ENCODE measurements at regions of chr17 and their contacts with region 1.

Region 1: GRCh38 chr17:21126645-21127510 is at the start of gene DHRS7B:
- DNase-seq: peak; percentile 92 to 98 (median 96)
- H3K4me3 ChIP-seq: peak within 1 kb of the TSS; percentile 64 to 100 (median 90)
- H3K27ac ChIP-seq: peak within 1 kb of the TSS in 58 of 59 donors; percentile 15 to 94 (median 74)
- H3K27me3 ChIP-seq: no peaks in the 10 kb centered on the region
- CTCF ChIP-seq: peak in 21 of 56 donors; percentile 10 to 48 (median 21)
- total RNA-seq, gene DHRS7B: 13.4 to 31.5 (median 21.3) TPM

Region 2: GRCh38 chr17:20992987-20993862 is 133.7 kb before region 1 on chr17:
- intact Hi-C with region 1: no loop called
- DNase-seq: peak; percentile 49 to 91 (median 78)
- H3K4me3 ChIP-seq: peak overlapping the region in 33 of 59 donors; percentile 8 to 59 (median 30)
- H3K27ac ChIP-seq: peak overlapping the region; percentile 5 to 98 (median 88)
- H3K27me3 ChIP-seq: no peaks in the 10 kb centered on the region
- CTCF ChIP-seq: peak; percentile 70 to 94 (median 90)

Region 3: DNA sequence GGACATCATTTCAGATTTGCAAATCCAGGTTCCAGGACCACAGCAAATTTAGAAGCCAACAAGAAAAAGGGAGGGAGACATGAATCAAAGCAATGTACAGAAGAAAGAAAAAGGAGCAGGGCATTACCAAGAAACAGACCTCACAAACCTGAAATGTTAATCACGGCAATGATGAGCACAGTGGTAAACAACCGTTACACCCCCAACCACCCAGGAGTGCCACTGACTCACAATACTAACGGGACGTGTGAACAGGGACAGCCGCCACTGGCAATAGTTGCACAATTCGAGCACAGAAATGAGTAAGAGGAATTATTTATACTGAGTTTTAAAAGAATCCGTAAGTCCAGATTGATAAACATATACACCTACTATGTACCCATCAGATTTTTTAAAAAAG is 97.8 kb before region 1 on chr17:
- intact Hi-C with region 1: no loop called
- DNase-seq: peak in 2 of 10 donors; percentile 46 to 55
- H3K4me3 ChIP-seq: peak overlapping the region in 14 of 59 donors; percentile 0 to 29 (median 18)
- H3K27ac ChIP-seq: peak overlapping the region in 56 of 59 donors; percentile 1 to 82 (median 67)
- H3K27me3 ChIP-seq: no peaks in the 10 kb centered on the region
- CTCF ChIP-seq: no peak

Region 4: GRCh38 chr17:21228104-21228503 is 101.2 kb after region 1 on chr17:
- intact Hi-C with region 1: no loop called
- DNase-seq: no peak
- H3K4me3 ChIP-seq: no peak overlapping the region
- H3K27ac ChIP-seq: no peak overlapping the region
- H3K27me3 ChIP-seq: no peaks in the 10 kb centered on the region
- CTCF ChIP-seq: no peak

Region 5: GRCh38 chr17:21252796-21253645 is 126.1 kb after region 1 on chr17 and contains the start of gene NATD1:
- intact Hi-C with region 1: loop called in 1 of 2 experiments (anchors 10 kb)
- DNase-seq: peak; percentile 78 to 92 (median 87)
- H3K4me3 ChIP-seq: peak within 1 kb of the TSS; percentile 50 to 85 (median 67)
- H3K27ac ChIP-seq: peak within 1 kb of the TSS in 54 of 59 donors; percentile 9 to 92 (median 76)
- H3K27me3 ChIP-seq: no peaks in the 10 kb centered on the region
- CTCF ChIP-seq: peak in 20 of 56 donors; percentile 7 to 56 (median 27)
- total RNA-seq, gene NATD1: 5.2 to 13.5 (median 7.6) TPM

Region 6: GRCh38 chr17:21457051-21458026 is 330.5 kb after region 1 on chr17:
- intact Hi-C with region 1: loop called in 1 of 2 experiments (anchors 5 kb)
- DNase-seq: peak; percentile 71 to 88 (median 80)
- H3K4me3 ChIP-seq: peak overlapping the region in 5 of 59 donors; percentile 1 to 12 (median 6)
- H3K27ac ChIP-seq: no peak overlapping the region
- H3K27me3 ChIP-seq: no peaks in the 10 kb centered on the region
- CTCF ChIP-seq: peak; percentile 67 to 97 (median 90)